ENCODE measurements at regions of chr3 and their contacts with region 1.

Region 1: GRCh38 chr3:134299185-134299887 is 48.7 kb upstream of the RYK start:
- DNase-seq: peak in 1 of 2 donors; percentile 66
- H3K4me3 ChIP-seq: no peak overlapping the region
- H3K27ac ChIP-seq: peak overlapping the region in 1 of 5 donors; percentile 8
- H3K4me1 ChIP-seq: peaks cover 0 to 4% (median 0%) of the 10 kb centered on the region in 4 donors
- H3K27me3 ChIP-seq: no peaks in the 10 kb centered on the region
- CTCF ChIP-seq: peak in 1 of 7 experiments; percentile 16
- EP300 ChIP-seq: no peak
- POLR2A ChIP-seq: no peak

Region 2: DNA sequence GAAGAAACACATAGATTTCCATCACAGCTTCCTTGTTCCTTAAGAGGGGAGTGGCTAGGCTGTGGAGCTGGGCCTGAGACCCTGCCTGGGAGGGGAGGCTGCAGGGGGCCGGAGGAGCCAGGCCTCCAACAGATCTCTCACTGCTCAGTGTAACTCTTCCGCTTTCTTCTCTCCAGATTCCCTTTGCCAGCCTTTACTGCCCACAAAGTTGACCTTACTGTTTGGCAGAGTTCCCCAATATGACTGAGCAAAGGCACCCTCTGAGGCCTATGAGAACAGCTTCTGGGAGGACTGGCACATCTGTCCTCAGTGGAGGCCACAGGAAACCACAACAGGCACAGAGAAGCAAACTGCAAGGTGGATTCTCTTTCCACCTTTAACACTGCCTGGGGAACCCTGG is 307.7 kb before region 1 on chr3:
- intact Hi-C with region 1: no loop called
- DNase-seq: no peak
- H3K4me3 ChIP-seq: no peak overlapping the region
- H3K27ac ChIP-seq: peak overlapping the region; percentile 1 to 45 (median 2)
- H3K4me1 ChIP-seq: peaks cover 0 to 34% (median 6%) of the 10 kb centered on the region in 4 donors
- H3K27me3 ChIP-seq: no peaks in the 10 kb centered on the region
- CTCF ChIP-seq: no peak
- EP300 ChIP-seq: no peak
- POLR2A ChIP-seq: no peak

Region 3: GRCh38 chr3:134126153-134126552 is 173.2 kb before region 1 on chr3:
- intact Hi-C with region 1: no loop called
- DNase-seq: no peak
- H3K4me3 ChIP-seq: no peak overlapping the region
- H3K27ac ChIP-seq: no peak overlapping the region
- H3K4me1 ChIP-seq: no peaks in the 10 kb centered on the region
- H3K27me3 ChIP-seq: no peaks in the 10 kb centered on the region
- CTCF ChIP-seq: no peak
- EP300 ChIP-seq: no peak
- POLR2A ChIP-seq: no peak

Region 4: DNA sequence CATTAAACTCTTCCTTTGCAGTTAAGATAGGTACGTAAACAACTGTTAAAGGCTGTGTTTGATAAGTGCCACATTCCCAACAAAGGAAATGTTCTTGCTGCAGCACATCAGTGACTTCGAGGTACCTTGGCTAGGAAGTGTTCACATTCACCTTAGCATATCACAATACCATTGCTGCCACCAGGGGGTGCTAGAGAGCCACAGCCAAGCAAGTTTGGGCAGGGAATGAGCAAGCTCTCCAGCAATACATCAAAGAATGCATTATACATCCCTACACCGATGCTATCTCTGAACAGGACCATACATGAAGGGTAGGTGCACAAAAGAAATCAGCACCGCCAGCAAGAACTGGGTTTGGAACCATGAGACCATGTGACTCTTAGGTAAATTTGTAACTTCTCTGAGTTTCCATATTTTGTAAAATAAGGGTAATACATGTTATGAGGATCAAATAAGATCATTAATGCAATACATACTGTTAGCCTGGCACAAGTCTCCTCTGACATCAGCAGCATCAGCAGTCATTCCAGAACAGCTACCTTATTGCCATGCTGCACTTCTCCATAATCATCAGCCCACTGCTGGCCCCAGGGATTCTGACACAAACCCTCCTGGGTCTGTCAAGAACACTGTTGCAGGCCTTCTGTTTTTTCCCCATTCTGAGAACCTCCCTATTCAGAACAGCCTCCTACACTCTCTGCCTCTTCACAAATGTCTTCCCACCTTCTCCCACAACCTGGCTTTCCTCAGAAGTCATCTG is 86.2 kb before region 1 on chr3:
- intact Hi-C with region 1: loop called (anchors 5 kb)
- DNase-seq: peak; percentile 88 to 92
- H3K4me3 ChIP-seq: no peak overlapping the region
- H3K27ac ChIP-seq: no peak overlapping the region
- H3K4me1 ChIP-seq: peaks cover 0 to 20% (median 6%) of the 10 kb centered on the region in 4 donors
- H3K27me3 ChIP-seq: no peaks in the 10 kb centered on the region
- CTCF ChIP-seq: peak in 6 of 7 experiments; percentile 78 to 99 (median 86)
- EP300 ChIP-seq: no peak
- POLR2A ChIP-seq: no peak

Measured in stomach (tissue), 19 donors.